Panc1 (cell line): ENCODE measurements at regions of chr5 and their contacts with region 1.

Region 1: DNA sequence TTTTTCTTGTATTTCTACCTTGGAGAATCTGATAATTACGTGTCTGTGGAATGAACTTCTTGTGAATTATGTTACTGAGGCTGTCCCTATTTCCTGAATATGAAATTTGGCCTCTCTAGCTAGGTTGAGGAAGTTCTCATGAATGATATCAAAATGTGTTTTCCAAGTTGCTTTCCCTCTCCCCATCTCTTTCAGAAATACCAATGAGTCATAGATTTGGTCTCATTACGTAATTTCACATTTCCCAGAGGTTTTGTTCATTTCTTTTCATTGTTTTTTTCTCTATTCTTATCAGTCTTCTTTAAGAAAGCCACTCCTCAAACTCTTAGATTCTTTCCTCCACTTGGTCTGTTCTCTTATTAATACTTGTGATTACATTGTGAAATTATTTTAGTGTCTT is 923.8 kb upstream of the CDH9 start:
- DNase-seq: no peak
- ATAC-seq: no peak
- H3K4me3 ChIP-seq: no peak overlapping the region
- H3K27ac ChIP-seq: no peak overlapping the region
- H3K4me1 ChIP-seq: no peaks in the 10 kb centered on the region
- H3K27me3 ChIP-seq: no peaks in the 10 kb centered on the region
- CTCF ChIP-seq: no peak

Region 2: GRCh38 chr5:26205121-26205520 is 1757.1 kb before region 1 on chr5:
- CTCF ChIA-PET with region 1: no interaction called
- POLR2A ChIA-PET with region 1: no interaction called
- in situ Hi-C with region 1: no loop called
- intact Hi-C with region 1: loop called (anchors 10 kb)
- DNase-seq: no peak
- ATAC-seq: no peak
- H3K4me3 ChIP-seq: no peak overlapping the region
- H3K27ac ChIP-seq: no peak overlapping the region
- H3K4me1 ChIP-seq: no peaks in the 10 kb centered on the region
- H3K27me3 ChIP-seq: no peaks in the 10 kb centered on the region
- CTCF ChIP-seq: no peak

Region 3: GRCh38 chr5:27947088-27947487 is 15.1 kb before region 1 on chr5:
- CTCF ChIA-PET with region 1: no interaction called
- POLR2A ChIA-PET with region 1: no interaction called
- in situ Hi-C with region 1: no loop called
- intact Hi-C with region 1: no loop called
- DNase-seq: no peak
- ATAC-seq: no peak
- H3K4me3 ChIP-seq: no peak overlapping the region
- H3K27ac ChIP-seq: no peak overlapping the region
- H3K4me1 ChIP-seq: no peaks in the 10 kb centered on the region
- H3K27me3 ChIP-seq: no peaks in the 10 kb centered on the region
- CTCF ChIP-seq: no peak